ENCODE measurements at regions of chr10 and their contacts with region 1.

Region 1: DNA sequence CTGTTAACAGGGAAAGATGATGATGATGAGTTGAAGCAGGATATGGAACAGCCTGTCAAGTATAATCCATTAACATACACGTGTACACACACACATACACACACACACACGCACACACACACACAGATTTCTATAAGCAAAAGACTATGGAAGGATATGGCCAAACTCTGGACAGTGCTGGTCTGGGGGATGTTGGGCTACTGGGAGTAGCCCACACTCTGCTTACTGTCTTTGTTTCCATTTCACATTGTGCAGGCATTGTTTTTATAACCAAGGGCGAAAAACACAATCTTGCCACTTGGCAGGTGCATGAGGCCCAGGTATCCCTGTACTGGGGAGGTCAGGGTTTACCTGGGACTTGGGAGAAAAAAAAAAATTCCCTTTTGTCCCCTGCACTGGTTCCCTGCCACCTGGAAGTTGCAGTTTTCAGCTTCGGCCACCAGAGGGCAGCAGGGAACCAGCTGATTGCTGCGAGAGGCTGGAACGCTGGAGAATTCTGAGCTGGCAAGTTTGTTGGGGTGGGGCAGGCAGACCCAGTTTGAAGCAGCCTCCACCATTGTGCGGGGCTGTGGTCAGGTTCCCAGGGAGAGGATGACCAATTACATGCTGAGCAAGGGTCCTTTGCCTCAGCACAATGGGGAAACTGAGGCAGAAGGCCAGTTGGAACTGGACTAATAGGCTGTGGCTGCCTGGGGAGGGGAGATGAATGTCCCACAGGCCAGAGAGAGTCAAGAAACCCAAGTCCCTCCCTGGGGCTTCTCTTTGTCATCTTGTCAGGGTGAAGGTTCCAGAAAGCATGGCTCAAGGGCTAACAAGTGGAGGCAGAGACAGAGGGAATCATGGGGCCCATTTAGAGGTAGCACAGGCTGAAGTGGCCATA is 27.3 kb downstream of the PPIF start:
- DNase-seq: peak; percentile 45
- H3K4me3 ChIP-seq: no peak overlapping the region
- H3K27ac ChIP-seq: no peak overlapping the region
- H3K27me3 ChIP-seq: no peaks in the 10 kb centered on the region
- CTCF ChIP-seq: peak; percentile 96

Region 2: GRCh38 chr10:79052291-79053080 is 322.1 kb before region 1 on chr10:
- CTCF ChIA-PET with region 1: no interaction called
- POLR2A ChIA-PET with region 1: no interaction called
- DNase-seq: no peak
- H3K4me3 ChIP-seq: no peak overlapping the region
- H3K27ac ChIP-seq: no peak overlapping the region
- H3K27me3 ChIP-seq: peaks cover 2% of the 10 kb centered on the region
- CTCF ChIP-seq: peak; percentile 34; the same call in 1 of the 2 replicates

Region 3: GRCh38 chr10:79347226-79347893 is 27.2 kb before region 1 on chr10 and contains the start of gene PPIF:
- CTCF ChIA-PET with region 1: interaction called, 14 read pairs
- POLR2A ChIA-PET with region 1: interaction called, 6 read pairs
- DNase-seq: peak; percentile 55
- H3K4me3 ChIP-seq: peak within 1 kb of the TSS; percentile 79
- H3K27ac ChIP-seq: peak within 1 kb of the TSS; percentile 87
- H3K27me3 ChIP-seq: no peaks in the 10 kb centered on the region
- CTCF ChIP-seq: peak; percentile 86
- polyA plus RNA-seq, gene PPIF: 68.6 and 77.2 TPM in 2 replicates

Region 4: GRCh38 chr10:79358783-79359182 is 15.8 kb before region 1 on chr10:
- CTCF ChIA-PET with region 1: interaction called, 37 read pairs
- POLR2A ChIA-PET with region 1: no interaction called
- DNase-seq: no peak
- H3K4me3 ChIP-seq: no peak overlapping the region
- H3K27ac ChIP-seq: no peak overlapping the region
- H3K27me3 ChIP-seq: no peaks in the 10 kb centered on the region
- CTCF ChIP-seq: no peak

Region 5: GRCh38 chr10:79454259-79454658 is 79.7 kb after region 1 on chr10:
- CTCF ChIA-PET with region 1: interaction called, 16 read pairs
- POLR2A ChIA-PET with region 1: no interaction called
- DNase-seq: peak; percentile 62
- H3K4me3 ChIP-seq: no peak overlapping the region
- H3K27ac ChIP-seq: no peak overlapping the region
- H3K27me3 ChIP-seq: no peaks in the 10 kb centered on the region
- CTCF ChIP-seq: no peak

Region 6: DNA sequence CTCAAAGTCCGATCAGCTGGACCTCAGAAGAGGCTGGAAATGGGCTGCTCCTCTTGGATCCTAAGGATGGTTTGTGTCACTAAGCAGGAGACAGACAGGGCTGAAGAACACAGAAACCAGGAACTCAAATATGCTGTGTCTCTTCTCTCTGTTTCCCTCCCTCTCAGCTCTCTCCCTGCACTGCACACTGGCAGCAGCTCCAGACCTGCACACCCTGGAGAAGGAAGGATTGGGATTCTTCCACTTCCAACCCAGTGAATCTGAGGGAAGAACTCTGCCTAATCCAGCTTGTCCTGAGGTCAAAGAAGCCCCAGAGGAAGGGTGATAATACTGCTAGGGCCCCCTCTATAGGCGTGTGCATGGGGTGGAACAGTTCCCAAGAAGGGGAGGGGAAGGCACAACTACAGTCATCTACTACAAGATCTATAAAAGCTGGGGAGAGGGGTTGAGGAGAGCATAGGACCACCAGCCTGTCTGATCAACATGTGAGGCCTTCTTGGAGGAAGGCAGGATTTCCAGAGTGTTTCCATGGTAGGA is 93.5 kb after region 1 on chr10:
- CTCF ChIA-PET with region 1: interaction called, 28 read pairs
- POLR2A ChIA-PET with region 1: no interaction called
- DNase-seq: no peak
- H3K4me3 ChIP-seq: no peak overlapping the region
- H3K27ac ChIP-seq: peak overlapping the region; percentile 49
- H3K27me3 ChIP-seq: no peaks in the 10 kb centered on the region
- CTCF ChIP-seq: no peak

Region 7: DNA sequence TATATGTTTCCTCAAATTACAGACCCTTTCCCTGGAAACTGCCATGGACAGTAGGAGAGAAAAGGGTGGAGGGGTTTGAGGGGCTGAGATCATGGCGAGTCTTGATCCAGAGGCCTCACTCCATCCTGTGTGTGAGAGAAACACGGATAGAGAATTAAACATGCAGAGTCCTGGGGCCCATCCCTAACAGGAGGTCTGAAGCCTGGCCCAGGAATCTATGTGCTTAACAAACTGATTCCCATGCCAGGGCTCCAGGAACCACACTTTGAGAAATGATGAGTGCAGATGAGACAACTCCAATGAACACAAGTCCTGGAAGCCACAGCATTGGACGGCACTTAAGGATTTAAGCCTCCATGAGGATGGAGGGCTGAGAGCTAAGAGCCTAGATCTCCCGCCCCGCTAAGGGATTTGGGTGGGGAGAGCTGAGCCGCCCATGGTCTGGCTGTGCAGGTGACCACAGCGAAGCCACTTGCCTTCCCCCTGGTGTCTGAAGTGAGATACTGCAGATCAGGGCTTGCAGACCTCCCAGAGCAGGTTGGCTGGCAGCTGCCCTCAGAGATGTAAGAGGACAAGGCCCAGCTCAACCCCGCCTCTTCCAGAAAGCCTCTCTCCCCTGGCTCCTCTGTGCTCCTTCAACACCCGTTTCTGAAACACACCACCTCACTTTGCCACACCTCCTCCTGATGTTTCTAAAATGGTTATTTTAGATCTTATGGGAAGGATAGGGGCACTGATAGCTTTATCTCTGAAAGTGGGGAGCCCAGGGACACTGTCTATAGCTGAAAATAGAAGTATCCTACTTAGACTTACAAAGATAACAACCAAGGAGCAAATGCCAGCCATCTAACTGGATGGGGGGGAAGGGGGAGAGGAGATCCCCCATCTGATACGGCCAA is 113.0 kb after region 1 on chr10:
- CTCF ChIA-PET with region 1: interaction called, 42 read pairs
- POLR2A ChIA-PET with region 1: no interaction called
- DNase-seq: no peak
- H3K4me3 ChIP-seq: no peak overlapping the region
- H3K27ac ChIP-seq: peak overlapping the region; percentile 88
- H3K27me3 ChIP-seq: no peaks in the 10 kb centered on the region
- CTCF ChIP-seq: peak; percentile 63

Region 8: DNA sequence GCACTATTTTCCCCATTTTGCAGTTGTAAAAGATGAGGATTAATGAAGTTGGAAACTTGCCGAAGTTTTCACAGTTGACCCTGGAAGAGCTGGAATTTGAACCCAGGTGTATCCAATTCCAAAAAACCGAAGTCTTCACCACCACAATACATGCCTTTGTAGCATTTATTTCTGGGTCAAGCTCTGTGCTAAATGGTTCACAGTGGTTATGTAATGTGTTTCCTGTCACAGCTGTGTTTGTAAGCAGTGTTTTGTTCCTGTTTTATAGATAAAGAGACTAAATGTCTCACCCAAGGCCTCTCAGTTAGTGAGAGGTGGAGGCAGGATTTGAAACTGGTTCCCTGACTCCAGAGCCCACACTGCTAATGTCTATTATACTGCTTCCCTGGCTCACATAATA is 168.1 kb after region 1 on chr10:
- CTCF ChIA-PET with region 1: interaction called, 19 read pairs
- POLR2A ChIA-PET with region 1: no interaction called
- DNase-seq: no peak
- H3K4me3 ChIP-seq: no peak overlapping the region
- H3K27ac ChIP-seq: no peak overlapping the region
- H3K27me3 ChIP-seq: peaks cover 5% of the 10 kb centered on the region
- CTCF ChIP-seq: no peak